Naive thymus-derived CD4-positive, alpha-beta T cell (primary cell): ENCODE measurements at regions of chr6 and their contacts with region 1.

Region 1: DNA sequence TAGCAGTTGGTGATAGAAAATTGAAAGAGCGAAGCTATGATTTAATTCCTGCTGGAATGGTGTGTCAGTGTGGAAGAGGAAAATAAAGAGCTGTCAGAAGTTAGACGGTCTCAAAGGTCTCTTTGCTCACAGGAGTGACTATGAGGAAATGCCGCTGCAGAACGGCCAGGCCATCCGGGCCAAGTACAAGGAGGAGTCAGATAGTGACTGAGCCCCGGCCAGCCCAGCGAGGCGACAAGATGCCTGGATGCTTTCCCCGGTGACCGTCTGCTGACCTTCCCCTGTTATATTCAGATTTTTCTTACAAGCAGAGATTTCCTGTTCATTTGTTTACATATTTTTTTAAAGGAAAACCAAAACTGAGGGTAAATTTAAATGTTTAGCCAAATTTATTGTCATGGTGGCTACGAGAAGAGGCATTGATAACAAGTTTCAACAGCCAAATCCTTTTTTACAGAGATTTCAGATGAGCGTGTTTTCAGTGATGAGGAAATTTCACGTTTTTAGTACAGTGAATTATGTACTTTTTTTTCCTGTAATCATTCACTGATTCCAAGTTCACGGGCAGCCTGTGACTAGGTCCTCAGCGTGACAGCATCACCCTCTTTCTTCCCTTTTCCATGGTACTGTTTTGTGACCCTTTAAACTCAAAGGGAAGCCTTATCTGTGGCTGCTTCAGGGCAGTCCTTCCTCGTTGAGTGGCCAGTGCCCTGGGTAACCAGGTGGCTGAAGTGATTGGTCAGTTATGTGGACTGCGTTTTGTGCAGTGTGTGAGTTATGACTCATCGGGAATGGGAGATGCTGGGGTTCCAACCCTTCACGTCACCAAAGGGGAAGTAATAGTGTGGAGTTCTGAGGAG is 12.6 kb downstream of the DYNLT1 start:
- DNase-seq: no peak
- ATAC-seq: peak; percentile 47
- H3K4me3 ChIP-seq: no peak overlapping the region
- H3K4me3 Mint-ChIP-seq: no peak overlapping the region
- H3K27ac ChIP-seq: peak overlapping the region; percentile 49
- H3K27ac Mint-ChIP-seq: peak overlapping the region; percentile 52 to 91 (median 83)
- H3K4me1 ChIP-seq: peaks cover 15 to 16% of the 10 kb centered on the region in 2 donors
- H3K4me1 Mint-ChIP-seq: peaks cover 21 to 61% (median 48%) of the 10 kb centered on the region in 7 donors
- H3K27me3 ChIP-seq: no peaks in the 10 kb centered on the region
- H3K27me3 Mint-ChIP-seq: no peaks in the 10 kb centered on the region

Region 2: GRCh38 chr6:157867155-157867559 is 764.8 kb before region 1 on chr6:
- CTCF ChIA-PET with region 1: no interaction called
- POLR2A ChIA-PET with region 1: no interaction called
- intact Hi-C with region 1: no loop called
- DNase-seq: peak in 3 of 9 donors; percentile 25 to 40 (median 35)
- ATAC-seq: peak; percentile 58
- H3K4me3 ChIP-seq: no peak overlapping the region
- H3K4me3 Mint-ChIP-seq: peak overlapping the region in 8 of 10 donors; percentile 10 to 58 (median 36)
- H3K27ac ChIP-seq: peak overlapping the region; percentile 44
- H3K27ac Mint-ChIP-seq: peak overlapping the region in 3 of 9 donors; percentile 84 to 89 (median 87)
- H3K4me1 ChIP-seq: peaks cover 2 to 20% of the 10 kb centered on the region in 2 donors
- H3K4me1 Mint-ChIP-seq: peaks cover 13 to 55% (median 34%) of the 10 kb centered on the region in 7 donors
- H3K27me3 ChIP-seq: no peaks in the 10 kb centered on the region
- H3K27me3 Mint-ChIP-seq: peaks cover 0 to 12% (median 0%) of the 10 kb centered on the region in 5 donors

Region 3: GRCh38 chr6:158595223-158595622 is 36.7 kb before region 1 on chr6:
- CTCF ChIA-PET with region 1: no interaction called
- POLR2A ChIA-PET with region 1: no interaction called
- intact Hi-C with region 1: no loop called
- DNase-seq: peak in 5 of 9 donors; percentile 7 to 32 (median 21)
- ATAC-seq: peak; percentile 66
- H3K4me3 ChIP-seq: no peak overlapping the region
- H3K4me3 Mint-ChIP-seq: no peak overlapping the region
- H3K27ac ChIP-seq: no peak overlapping the region
- H3K27ac Mint-ChIP-seq: peak overlapping the region in 1 of 9 donors; percentile 1
- H3K4me1 ChIP-seq: no peaks in the 10 kb centered on the region
- H3K4me1 Mint-ChIP-seq: peaks cover 0 to 18% (median 4%) of the 10 kb centered on the region in 7 donors
- H3K27me3 ChIP-seq: no peaks in the 10 kb centered on the region
- H3K27me3 Mint-ChIP-seq: no peaks in the 10 kb centered on the region

Region 4: GRCh38 chr6:158644231-158645063 is 12.5 kb after region 1 on chr6 and contains the start of gene DYNLT1:
- CTCF ChIA-PET with region 1: interaction called, 4 read pairs
- POLR2A ChIA-PET with region 1: interaction called, 11 read pairs
- intact Hi-C with region 1: loop called in 1 of 2 experiments (anchors 1 kb)
- DNase-seq: peak; percentile 72 to 99 (median 87)
- ATAC-seq: peak; percentile 88
- H3K4me3 ChIP-seq: peak within 1 kb of the TSS; percentile 81
- H3K4me3 Mint-ChIP-seq: peak within 1 kb of the TSS; percentile 92 to 100 (median 99)
- H3K27ac ChIP-seq: peak within 1 kb of the TSS; percentile 97
- H3K27ac Mint-ChIP-seq: peak within 1 kb of the TSS; percentile 88 to 100 (median 98)
- H3K4me1 ChIP-seq: peaks cover 35 to 45% of the 10 kb centered on the region in 2 donors
- H3K4me1 Mint-ChIP-seq: peaks cover 47 to 72% (median 67%) of the 10 kb centered on the region in 7 donors
- H3K27me3 ChIP-seq: no peaks in the 10 kb centered on the region
- H3K27me3 Mint-ChIP-seq: no peaks in the 10 kb centered on the region
- total RNA-seq, gene DYNLT1: 66.4 to 122 (median 75.9) TPM